ENCODE measurements at regions of chr10 and their contacts with region 1.

Region 1: GRCh38 chr10:121734589-121735045 is 136.4 kb upstream of the FGFR2 start:
- DNase-seq: no peak
- ATAC-seq: no peak
- H3K4me3 ChIP-seq: peak overlapping the region in 6 of 12 donors; percentile 7 to 45 (median 17)
- H3K27ac ChIP-seq: no peak overlapping the region
- H3K4me1 ChIP-seq: peaks cover 0 to 12% (median 5%) of the 10 kb centered on the region in 12 donors
- H3K27me3 ChIP-seq: peaks cover 0 to 34% (median 0%) of the 10 kb centered on the region in 9 donors
- CTCF ChIP-seq: peak; percentile 54 to 81 (median 69)
- POLR2A ChIP-seq: no peak

Region 2: GRCh38 chr10:120942806-120943413 is 791.7 kb before region 1 on chr10:
- intact Hi-C with region 1: loop called (anchors 2 to 5 kb)
- DNase-seq: peak; percentile 69 to 86 (median 77)
- ATAC-seq: peak; percentile 55 to 94 (median 90)
- H3K4me3 ChIP-seq: peak overlapping the region in 3 of 12 donors; percentile 9 to 28 (median 12)
- H3K27ac ChIP-seq: no peak overlapping the region
- H3K4me1 ChIP-seq: peaks cover 0 to 7% (median 4%) of the 10 kb centered on the region in 12 donors
- H3K27me3 ChIP-seq: peaks cover 0 to 31% (median 0%) of the 10 kb centered on the region in 9 donors
- CTCF ChIP-seq: peak; percentile 79 to 90 (median 85)
- POLR2A ChIP-seq: no peak

Region 3: GRCh38 chr10:121615435-121615793 is 119.2 kb before region 1 on chr10:
- intact Hi-C with region 1: loop called in 1 of 10 experiments (anchors 10 kb)
- DNase-seq: peak in 3 of 5 donors; percentile 41 to 47 (median 42)
- ATAC-seq: peak in 3 of 4 donors; percentile 32 to 82 (median 77)
- H3K4me3 ChIP-seq: no peak overlapping the region
- H3K27ac ChIP-seq: peak overlapping the region in 2 of 12 donors; percentile 1 to 20
- H3K4me1 ChIP-seq: no peaks in the 10 kb centered on the region
- H3K27me3 ChIP-seq: peaks cover 0 to 11% (median 0%) of the 10 kb centered on the region in 9 donors
- CTCF ChIP-seq: no peak
- POLR2A ChIP-seq: no peak

Region 4: DNA sequence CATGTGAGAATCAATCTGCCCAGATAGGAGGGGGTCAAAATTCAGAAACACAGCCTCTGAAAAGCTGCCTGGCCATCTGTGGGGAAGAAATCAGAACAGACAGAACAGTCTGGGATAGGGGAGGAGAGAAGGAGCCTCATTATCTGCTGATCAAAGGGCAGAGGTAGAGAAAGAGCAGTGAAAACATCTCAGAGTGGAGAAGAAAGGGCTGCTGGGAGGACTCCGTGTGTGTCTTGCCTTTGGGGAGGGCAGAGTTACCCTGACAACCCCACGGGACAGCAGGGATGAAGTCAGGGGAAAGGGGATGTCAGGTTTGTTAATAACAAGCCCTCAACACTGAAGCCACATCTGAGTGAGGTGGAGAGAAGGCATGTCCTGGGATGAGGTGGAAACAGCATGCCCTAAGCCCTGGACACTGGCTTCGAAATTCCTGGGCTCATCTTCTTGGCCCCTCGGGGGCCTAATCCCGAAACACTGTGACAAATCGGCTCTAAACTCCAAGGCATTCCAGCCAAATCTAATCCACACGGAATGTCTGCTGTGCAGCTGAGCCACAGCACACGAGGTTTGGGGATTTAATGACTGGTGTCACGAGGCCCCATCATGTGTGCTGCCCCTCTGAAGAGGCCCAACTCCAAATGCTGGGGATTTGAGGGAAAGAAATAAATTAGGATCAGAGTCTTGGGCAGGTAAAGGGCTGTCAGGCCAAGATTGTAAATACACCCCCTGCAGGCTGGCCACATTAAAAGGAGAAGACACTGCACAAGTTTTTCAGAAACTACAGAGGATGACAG is 53.5 kb before region 1 on chr10:
- intact Hi-C with region 1: no loop called
- DNase-seq: no peak
- ATAC-seq: no peak
- H3K4me3 ChIP-seq: no peak overlapping the region
- H3K27ac ChIP-seq: peak overlapping the region in 1 of 12 donors; percentile 30
- H3K4me1 ChIP-seq: no peaks in the 10 kb centered on the region
- H3K27me3 ChIP-seq: peaks cover 0 to 15% (median 0%) of the 10 kb centered on the region in 9 donors
- CTCF ChIP-seq: no peak
- POLR2A ChIP-seq: no peak

Region 5: GRCh38 chr10:122279725-122280141 is 545.1 kb after region 1 on chr10:
- intact Hi-C with region 1: no loop called
- DNase-seq: peak in 3 of 5 donors; percentile 33 to 58 (median 34)
- ATAC-seq: peak; percentile 57 to 75 (median 72)
- H3K4me3 ChIP-seq: no peak overlapping the region
- H3K27ac ChIP-seq: no peak overlapping the region
- H3K4me1 ChIP-seq: peaks cover 0 to 13% (median 0%) of the 10 kb centered on the region in 12 donors
- H3K27me3 ChIP-seq: peaks cover 0 to 2% (median 0%) of the 10 kb centered on the region in 9 donors
- CTCF ChIP-seq: peak; percentile 40 to 69 (median 58)
- POLR2A ChIP-seq: no peak